HCT116 (cell line): ENCODE measurements at regions of chr11 and their contacts with region 1.

Region 1: GRCh38 chr11:93801366-93801765 is 17.3 kb downstream of the MED17 start:
- DNase-seq: no peak
- ATAC-seq: no peak
- H3K4me3 ChIP-seq: no peak overlapping the region
- H3K27ac ChIP-seq: no peak overlapping the region
- H3K4me1 ChIP-seq: no peaks in the 10 kb centered on the region
- H3K27me3 ChIP-seq: no peaks in the 10 kb centered on the region
- CTCF ChIP-seq: no peak
- POLR2A ChIP-seq: no peak
- RAD21 ChIP-seq: no peak

Region 2: DNA sequence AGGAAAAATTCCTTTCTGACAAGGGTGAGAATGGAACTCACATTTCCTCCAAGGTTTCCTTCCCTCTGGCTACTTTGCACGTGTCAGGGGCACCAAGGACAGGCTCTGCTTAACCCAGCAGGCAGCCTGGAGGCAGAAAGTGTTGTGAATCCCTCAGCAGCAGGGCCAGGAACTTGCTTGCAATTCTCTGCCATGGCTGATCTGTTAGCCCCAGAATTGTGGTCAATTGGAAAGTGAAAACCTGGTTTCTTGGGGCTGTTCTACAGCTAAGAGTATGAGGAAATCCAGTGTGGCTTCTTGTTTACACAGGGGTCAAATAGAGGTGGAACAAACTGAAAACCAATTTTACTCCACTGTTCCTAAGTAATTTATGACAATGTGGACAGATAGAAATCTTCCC is 178.2 kb before region 1 on chr11:
- CTCF ChIA-PET with region 1: no interaction called
- POLR2A ChIA-PET with region 1: no interaction called
- RAD21 ChIA-PET with region 1: no interaction called
- intact Hi-C with region 1: no loop called
- DNase-seq: no peak
- ATAC-seq: no peak
- H3K4me3 ChIP-seq: no peak overlapping the region
- H3K27ac ChIP-seq: no peak overlapping the region
- H3K4me1 ChIP-seq: no peaks in the 10 kb centered on the region
- H3K27me3 ChIP-seq: no peaks in the 10 kb centered on the region
- CTCF ChIP-seq: no peak
- POLR2A ChIP-seq: no peak
- RAD21 ChIP-seq: no peak

Region 3: DNA sequence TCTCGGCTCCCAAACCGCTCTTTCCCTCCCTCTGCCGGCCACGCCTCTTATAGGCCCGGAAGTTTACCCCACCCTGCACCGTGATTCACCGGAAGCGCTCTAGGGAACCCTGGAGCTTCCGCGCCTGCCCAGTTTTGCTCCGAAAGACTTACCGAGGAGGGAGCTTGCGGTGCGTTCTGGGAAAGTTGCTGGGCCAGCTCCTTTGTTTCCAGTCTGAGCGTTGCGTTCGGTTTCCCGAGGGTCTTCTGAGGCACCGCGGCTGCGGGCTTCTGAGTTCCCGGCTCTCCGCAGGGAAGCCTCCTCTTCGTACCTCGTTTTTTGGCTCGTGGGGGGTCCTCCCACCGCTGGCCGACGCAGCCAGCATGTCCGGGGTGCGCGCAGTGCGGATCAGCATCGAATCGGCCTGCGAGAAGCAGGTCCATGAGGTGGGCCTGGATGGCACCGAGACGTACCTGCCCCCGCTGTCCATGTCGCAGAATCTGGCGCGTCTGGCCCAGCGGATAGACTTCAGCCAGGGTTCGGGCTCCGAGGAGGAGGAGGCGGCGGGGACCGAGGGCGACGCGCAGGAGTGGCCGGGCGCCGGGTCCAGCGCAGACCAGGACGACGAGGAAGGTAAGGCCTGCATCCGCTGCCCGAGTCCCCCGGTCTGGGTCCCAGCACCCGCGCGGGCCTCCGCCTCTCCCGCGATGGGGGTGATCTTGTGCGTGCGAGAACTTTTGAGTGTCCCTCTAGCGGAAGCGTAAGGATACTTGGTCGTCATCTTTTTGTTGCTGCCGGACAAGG is 17.0 kb before region 1 on chr11 and contains the start of gene MED17:
- CTCF ChIA-PET with region 1: no interaction called
- POLR2A ChIA-PET with region 1: interaction called, 10 read pairs
- RAD21 ChIA-PET with region 1: no interaction called
- intact Hi-C with region 1: no loop called
- DNase-seq: peak; percentile 81
- ATAC-seq: peak; percentile 93
- H3K4me3 ChIP-seq: peak within 1 kb of the TSS; percentile 75 to 93
- H3K27ac ChIP-seq: peak within 1 kb of the TSS; percentile 87
- H3K4me1 ChIP-seq: peaks cover 9 to 12% of the 10 kb centered on the region in 2 experiments; a peak in 3 of 4 replicates
- H3K27me3 ChIP-seq: no peaks in the 10 kb centered on the region
- CTCF ChIP-seq: peak in 2 of 3 experiments; percentile 46 to 47; a peak in 4 of 6 replicates
- POLR2A ChIP-seq: peak; percentile 97
- RAD21 ChIP-seq: no peak
- total RNA-seq, gene MED17: 41.1 TPM